Activated T-helper 1 cell treated with anti-CD3 and anti-CD28 coated beads, Interleukin-12 subunit alpha, Interleukin-12 subunit beta, Interleukin-2, Interleukin-4 antibody, amounts not matched to agents 30 ng/mL and 10 ng/mL and 1 ng/mL, durations not matched to agents 14 hours and 24 hours and 36 hours (primary cell): ENCODE measurements at regions of chr19 and their contacts with region 1.

Region 1: GRCh38 chr19:47273313-47273977 is 1.2 kb upstream of the INAFM1 start:
- DNase-seq: peak; percentile 90
- H3K4me3 Mint-ChIP-seq: peak overlapping the region; percentile 92
- H3K27ac Mint-ChIP-seq: peak overlapping the region; percentile 98
- H3K4me1 Mint-ChIP-seq: peaks cover 29% of the 10 kb centered on the region
- H3K27me3 Mint-ChIP-seq: no peaks in the 10 kb centered on the region

Region 2: GRCh38 chr19:46860125-46860845 is 413.2 kb before region 1 on chr19:
- intact Hi-C with region 1: loop called (anchors 5 kb)
- DNase-seq: peak; percentile 97
- H3K4me3 Mint-ChIP-seq: peak overlapping the region; percentile 92
- H3K27ac Mint-ChIP-seq: peak overlapping the region; percentile 97
- H3K4me1 Mint-ChIP-seq: peaks cover 25% of the 10 kb centered on the region
- H3K27me3 Mint-ChIP-seq: no peaks in the 10 kb centered on the region

Region 3: GRCh38 chr19:47225746-47226425 is 47.6 kb before region 1 on chr19:
- intact Hi-C with region 1: loop called (anchors 1 kb)
- DNase-seq: peak; percentile 87
- H3K4me3 Mint-ChIP-seq: peak overlapping the region; percentile 38
- H3K27ac Mint-ChIP-seq: peak overlapping the region; percentile 82
- H3K4me1 Mint-ChIP-seq: peaks cover 6% of the 10 kb centered on the region
- H3K27me3 Mint-ChIP-seq: no peaks in the 10 kb centered on the region

Region 4: GRCh38 chr19:47296036-47296435 is 22.6 kb after region 1 on chr19:
- intact Hi-C with region 1: no loop called
- DNase-seq: peak; percentile 68
- H3K4me3 Mint-ChIP-seq: no peak overlapping the region
- H3K27ac Mint-ChIP-seq: no peak overlapping the region
- H3K4me1 Mint-ChIP-seq: peaks cover 5% of the 10 kb centered on the region
- H3K27me3 Mint-ChIP-seq: no peaks in the 10 kb centered on the region

Region 5: DNA sequence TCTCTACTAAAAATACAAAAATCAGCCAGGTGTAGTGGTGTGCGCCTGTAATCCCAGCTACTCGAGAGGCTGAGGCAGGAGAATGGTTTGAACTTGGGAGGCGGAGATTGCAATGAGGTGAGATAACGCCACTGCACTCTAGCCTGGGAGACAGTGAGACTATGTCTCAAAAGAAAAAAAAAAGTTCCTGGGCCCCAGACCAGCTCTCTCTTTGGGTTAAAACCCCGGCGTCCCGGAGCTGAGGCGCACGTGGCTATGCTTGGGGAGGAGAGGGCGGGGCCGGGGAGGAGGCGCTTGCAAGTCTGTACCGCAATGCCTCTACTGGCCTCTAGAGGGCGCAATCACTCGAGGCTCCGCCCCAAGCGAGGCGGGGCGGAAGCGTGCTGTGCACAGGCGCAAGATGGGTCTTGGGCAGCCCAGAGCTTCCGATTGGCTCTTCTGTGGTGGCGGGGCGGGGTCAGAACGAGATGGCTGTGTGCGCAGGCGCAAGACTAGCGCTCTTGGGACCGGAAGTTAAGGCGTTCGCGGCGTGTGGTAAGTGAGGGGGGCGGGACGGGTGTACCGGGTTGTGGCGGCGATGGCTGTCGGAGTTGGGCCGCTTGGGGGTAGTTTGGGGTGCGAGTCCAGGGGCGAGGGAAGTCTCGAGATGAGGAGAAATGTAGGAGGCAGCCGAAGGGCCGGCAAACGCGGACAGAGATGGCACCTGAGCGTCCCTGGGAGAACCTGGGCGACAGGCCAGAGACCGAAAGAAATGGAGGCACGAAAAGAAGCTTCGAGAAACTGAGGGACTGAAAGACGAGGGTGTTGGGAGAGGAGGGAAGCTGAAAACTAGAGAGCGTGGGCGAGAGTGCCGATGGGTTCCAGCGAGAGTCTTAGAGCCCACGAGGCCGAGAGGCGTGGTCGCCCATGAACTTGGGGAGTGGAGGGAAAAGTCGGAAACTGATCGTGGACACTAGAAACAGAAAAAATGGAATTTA is 75.7 kb after region 1 on chr19 and contains the start of gene DHX34:
- intact Hi-C with region 1: loop called (anchors 1 kb)
- DNase-seq: peak; percentile 100
- H3K4me3 Mint-ChIP-seq: peak within 1 kb of the TSS; percentile 93
- H3K27ac Mint-ChIP-seq: peak within 1 kb of the TSS; percentile 94
- H3K4me1 Mint-ChIP-seq: peaks cover 40% of the 10 kb centered on the region
- H3K27me3 Mint-ChIP-seq: no peaks in the 10 kb centered on the region
- total RNA-seq, gene DHX34: 31.1 and 33.9 TPM in 2 replicates

Region 6: GRCh38 chr19:47434088-47434487 is 160.6 kb after region 1 on chr19:
- intact Hi-C with region 1: no loop called
- DNase-seq: no peak
- H3K4me3 Mint-ChIP-seq: no peak overlapping the region
- H3K27ac Mint-ChIP-seq: no peak overlapping the region
- H3K4me1 Mint-ChIP-seq: peaks cover 42% of the 10 kb centered on the region
- H3K27me3 Mint-ChIP-seq: peaks cover 17% of the 10 kb centered on the region

Region 7: GRCh38 chr19:47514869-47515588 is 241.6 kb after region 1 on chr19 and contains the start of gene NAPA:
- intact Hi-C with region 1: loop called (anchors 1 kb)
- DNase-seq: peak; percentile 100
- H3K4me3 Mint-ChIP-seq: peak within 1 kb of the TSS; percentile 95
- H3K27ac Mint-ChIP-seq: peak within 1 kb of the TSS; percentile 92
- H3K4me1 Mint-ChIP-seq: peaks cover 63% of the 10 kb centered on the region
- H3K27me3 Mint-ChIP-seq: peaks cover 4% of the 10 kb centered on the region
- total RNA-seq, gene NAPA: 66.4 and 68.7 TPM in 2 replicates